Panc1 (cell line): ENCODE measurements at regions of chr6 and their contacts with region 1.

Region 1: DNA sequence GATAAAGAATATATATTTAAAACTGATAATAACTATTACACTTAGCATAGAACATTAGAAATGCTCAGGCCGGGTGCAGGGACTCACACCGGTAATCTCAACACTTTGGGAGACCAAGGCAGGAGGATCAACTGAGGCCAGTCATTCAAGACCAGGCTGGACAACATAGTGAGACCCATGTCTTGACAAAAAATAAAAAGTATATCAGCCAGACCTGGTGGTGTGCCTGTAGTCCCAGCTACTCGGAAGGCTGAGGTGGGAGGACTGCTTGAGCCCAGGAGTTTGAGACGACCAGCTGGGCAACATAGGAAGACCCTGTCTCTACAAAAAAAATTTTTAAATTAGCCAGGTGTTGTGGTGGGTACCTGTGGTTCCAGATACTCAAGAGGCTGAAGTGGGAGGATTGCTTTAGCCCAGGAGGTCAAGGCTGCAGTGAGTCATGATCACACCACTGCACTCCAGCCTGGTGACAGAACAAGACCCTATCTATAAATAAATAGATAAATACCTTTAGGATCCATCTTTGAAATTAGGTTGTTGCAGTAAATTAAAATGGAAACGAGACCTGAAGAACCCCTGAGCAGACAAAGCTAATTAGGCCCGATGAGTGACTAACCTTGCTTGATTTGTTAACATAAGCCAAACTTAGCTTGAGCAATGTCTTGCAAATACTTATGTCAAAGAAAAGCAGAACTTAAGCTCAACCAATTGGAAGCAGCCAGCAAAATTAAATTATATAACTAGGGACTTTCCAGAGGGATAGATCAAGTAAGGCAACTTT is 75.8 kb upstream of the E2F3 start:
- DNase-seq: no peak
- ATAC-seq: no peak
- H3K4me3 ChIP-seq: no peak overlapping the region
- H3K27ac ChIP-seq: no peak overlapping the region
- H3K4me1 ChIP-seq: no peaks in the 10 kb centered on the region
- H3K27me3 ChIP-seq: peaks cover 5% of the 10 kb centered on the region
- CTCF ChIP-seq: no peak

Region 2: GRCh38 chr6:20312606-20313005 is 13.2 kb before region 1 on chr6:
- CTCF ChIA-PET with region 1: no interaction called
- POLR2A ChIA-PET with region 1: no interaction called
- in situ Hi-C with region 1: no loop called
- intact Hi-C with region 1: no loop called
- DNase-seq: no peak
- ATAC-seq: no peak
- H3K4me3 ChIP-seq: no peak overlapping the region
- H3K27ac ChIP-seq: no peak overlapping the region
- H3K4me1 ChIP-seq: no peaks in the 10 kb centered on the region
- H3K27me3 ChIP-seq: peaks cover 18% of the 10 kb centered on the region
- CTCF ChIP-seq: no peak

Region 3: GRCh38 chr6:21180155-21180554 is 854.3 kb after region 1 on chr6:
- CTCF ChIA-PET with region 1: no interaction called
- POLR2A ChIA-PET with region 1: interaction called, 11 read pairs
- in situ Hi-C with region 1: no loop called
- intact Hi-C with region 1: no loop called
- DNase-seq: no peak
- ATAC-seq: no peak
- H3K4me3 ChIP-seq: no peak overlapping the region
- H3K27ac ChIP-seq: no peak overlapping the region
- H3K4me1 ChIP-seq: no peaks in the 10 kb centered on the region
- H3K27me3 ChIP-seq: no peaks in the 10 kb centered on the region
- CTCF ChIP-seq: no peak